BJ (cell line): ENCODE measurements at regions of chr14 and their contacts with region 1.

Region 1: DNA sequence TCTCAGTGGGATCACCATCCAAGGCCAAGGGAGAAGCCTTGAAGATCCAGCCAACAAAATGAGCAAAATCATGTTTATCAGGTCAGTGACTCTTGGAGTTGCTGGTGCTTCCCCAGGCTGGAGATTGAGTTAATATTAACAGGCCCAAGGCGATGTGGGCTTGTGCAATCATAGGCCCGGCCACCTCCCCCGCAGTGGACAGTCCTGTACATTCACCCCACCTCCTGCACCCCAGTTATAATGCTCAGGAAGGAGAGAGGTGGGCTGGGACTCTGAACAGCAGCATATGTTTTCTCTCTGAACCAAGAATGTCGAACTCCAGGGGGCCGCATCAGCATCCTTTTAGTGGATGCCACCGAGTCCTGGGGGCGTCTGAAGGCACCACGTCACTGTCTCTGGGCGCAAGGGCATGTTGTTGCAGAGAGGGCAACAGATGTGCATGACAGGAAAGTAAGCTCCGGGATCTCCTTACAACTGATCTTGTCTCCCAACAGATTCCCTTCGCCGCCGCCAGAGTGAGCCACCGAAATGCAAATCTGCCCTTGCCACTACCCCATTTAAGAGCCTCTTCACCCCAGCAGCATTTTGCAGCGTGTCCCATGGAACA is 32.2 kb upstream of the SERPINA6 start:
- DNase-seq: no peak
- H3K4me3 ChIP-seq: no peak overlapping the region
- H3K27me3 ChIP-seq: no peaks in the 10 kb centered on the region
- CTCF ChIP-seq: peak; percentile 64

Region 2: DNA sequence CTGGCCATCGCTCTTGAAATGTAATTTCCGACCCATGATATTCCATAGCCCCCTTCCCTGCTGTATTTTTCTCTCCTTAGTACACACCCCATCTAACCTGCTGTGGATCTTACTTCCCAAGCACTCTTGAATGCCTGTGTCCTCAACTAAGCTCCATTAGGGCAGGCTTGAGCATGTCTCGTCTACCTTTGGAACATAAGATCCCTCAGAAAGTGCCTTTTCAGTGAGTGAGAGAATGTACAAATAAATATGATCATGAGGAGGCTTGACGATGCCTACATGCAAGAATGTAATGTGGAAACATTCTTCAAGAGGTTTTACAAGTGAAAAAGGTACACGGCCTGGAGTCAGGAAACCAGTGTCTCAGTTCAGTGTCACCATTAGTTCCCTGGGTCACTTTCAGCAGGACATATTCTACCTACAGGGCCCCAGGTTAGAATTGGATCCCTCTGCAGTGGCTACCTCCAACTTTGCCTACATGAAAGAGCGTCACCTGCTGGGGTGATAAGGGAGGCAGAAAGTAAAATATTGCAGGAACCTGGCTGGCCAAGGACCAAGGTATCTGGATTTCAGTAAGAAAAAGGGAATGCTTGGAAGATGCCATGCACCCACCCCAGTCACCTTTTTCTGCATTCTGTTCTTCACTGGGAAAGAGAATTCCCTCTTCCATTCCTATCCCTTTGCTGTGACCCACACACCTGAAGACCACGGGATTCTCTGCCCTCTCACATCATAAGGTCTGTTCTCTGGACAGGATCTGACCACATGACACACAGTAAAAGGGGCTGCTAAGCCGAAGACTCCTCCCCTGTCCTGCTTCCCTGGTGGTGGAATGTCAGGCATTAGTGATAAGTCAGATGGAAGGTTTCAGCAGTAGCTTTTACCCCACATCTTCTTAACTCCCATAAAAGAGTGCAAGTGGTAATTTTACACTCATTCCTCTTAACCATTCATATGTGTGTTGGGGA is 57.7 kb after region 1 on chr14:
- CTCF ChIA-PET with region 1: interaction called, 20 read pairs
- POLR2A ChIA-PET with region 1: no interaction called
- DNase-seq: no peak
- H3K4me3 ChIP-seq: no peak overlapping the region
- H3K27me3 ChIP-seq: no peaks in the 10 kb centered on the region; the same call in 1 of the 2 replicates
- CTCF ChIP-seq: peak; percentile 48